ENCODE measurements at regions of chr3 and their contacts with region 1.

Region 1: DNA sequence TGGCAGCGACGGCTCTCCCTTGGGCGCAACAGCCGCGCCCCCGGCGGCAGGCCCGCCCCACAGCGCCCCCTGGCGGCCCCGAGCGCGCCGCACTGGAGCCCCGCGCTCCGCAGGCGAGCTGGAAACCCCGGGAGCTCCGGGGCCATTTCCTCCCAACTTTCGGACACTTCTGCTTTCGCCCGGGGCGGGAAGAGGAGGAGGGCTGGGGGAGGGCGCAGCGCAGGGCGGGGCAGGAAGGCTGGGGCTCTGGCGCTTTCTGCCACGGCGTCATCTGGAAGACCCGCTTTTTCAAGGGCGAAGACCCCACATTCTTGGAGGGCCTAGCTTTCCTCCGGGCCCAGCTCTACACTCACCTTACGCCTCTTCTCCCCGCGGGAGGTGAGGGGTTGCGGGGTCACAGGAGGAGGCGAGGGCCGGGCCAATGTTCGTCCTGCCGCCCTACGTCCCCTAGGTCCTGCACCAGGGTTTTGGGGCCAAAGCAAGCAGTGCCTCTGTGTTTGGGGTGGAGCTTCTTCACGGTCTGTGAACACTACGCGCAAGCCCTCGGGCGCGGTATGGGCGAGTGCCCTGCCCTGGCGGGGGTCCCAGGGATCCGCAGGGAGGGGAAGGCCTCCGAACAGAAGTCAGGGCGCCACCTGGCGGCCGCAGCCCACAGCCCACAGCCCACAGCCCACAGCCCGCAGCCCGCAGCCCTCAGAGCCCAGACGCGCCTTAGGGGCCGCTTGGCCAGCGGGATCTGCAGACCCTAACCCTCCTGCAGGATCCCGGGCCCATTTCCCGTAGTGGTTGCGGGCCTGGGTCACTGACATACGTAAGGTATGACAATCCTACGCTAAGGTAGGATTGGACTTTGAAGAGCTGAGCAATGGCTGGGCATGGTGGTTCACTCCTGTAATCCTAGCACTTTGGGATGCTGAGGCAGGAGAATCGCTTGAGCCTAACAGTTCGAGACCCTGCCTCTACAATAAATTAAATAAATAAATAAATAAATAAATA is 31.1 kb downstream of the FOXL2 start:
- DNase-seq: peak; percentile 91
- H3K4me3 Mint-ChIP-seq: peak overlapping the region; percentile 85
- H3K27ac Mint-ChIP-seq: peak overlapping the region; percentile 76
- H3K4me1 Mint-ChIP-seq: peaks cover 6% of the 10 kb centered on the region
- H3K27me3 Mint-ChIP-seq: no peaks in the 10 kb centered on the region
- CTCF ChIP-seq: peak; percentile 94

Region 2: DNA sequence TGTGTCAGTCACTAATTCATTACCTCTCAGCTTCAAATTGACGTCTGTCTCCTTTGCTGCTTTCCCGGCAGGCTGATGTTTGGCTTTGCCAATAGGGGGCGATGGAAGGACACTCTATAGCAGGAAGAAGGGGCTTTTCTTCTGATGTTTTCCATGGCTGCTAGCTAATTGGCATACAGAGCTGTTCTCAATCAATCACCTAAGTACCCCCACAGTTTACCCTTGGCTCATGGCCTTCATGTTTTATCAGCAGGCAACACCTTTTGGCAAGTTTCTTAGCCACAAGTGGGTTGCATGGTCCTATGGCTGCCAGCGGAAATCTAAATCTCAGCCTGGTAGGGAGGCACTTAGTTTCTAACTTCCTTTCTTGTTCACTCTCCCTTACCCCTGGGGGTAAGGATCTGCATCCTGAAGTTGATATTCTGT is 436.4 kb before region 1 on chr3:
- CTCF ChIA-PET with region 1: no interaction called
- POLR2A ChIA-PET with region 1: no interaction called
- intact Hi-C with region 1: loop called (anchors 1 kb)
- DNase-seq: peak; percentile 62
- H3K4me3 Mint-ChIP-seq: no peak overlapping the region
- H3K27ac Mint-ChIP-seq: peak overlapping the region; percentile 57
- H3K4me1 Mint-ChIP-seq: peaks cover 6% of the 10 kb centered on the region
- H3K27me3 Mint-ChIP-seq: no peaks in the 10 kb centered on the region
- CTCF ChIP-seq: peak; percentile 88

Region 3: DNA sequence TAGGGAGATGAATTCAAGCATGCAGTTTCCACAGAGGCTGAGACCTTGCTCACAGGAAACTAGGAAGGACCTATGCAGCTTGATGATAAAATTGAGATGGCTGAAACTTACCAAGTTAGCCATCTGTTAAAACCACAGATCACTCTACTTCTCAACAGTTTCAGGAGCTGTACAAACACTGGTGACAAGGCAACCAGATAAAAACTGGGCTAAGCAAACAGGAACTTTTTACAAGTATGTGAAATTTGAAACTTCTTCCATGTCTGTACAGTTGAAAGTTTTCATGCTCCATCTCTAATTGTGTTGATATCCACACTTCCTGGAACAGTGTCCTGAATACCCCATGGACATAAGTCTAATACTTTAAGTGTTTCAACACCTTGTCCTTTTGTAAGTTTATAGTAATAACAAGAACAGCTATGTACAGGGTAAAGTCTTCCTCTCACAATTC is 229.0 kb before region 1 on chr3:
- CTCF ChIA-PET with region 1: interaction called, 81 read pairs
- POLR2A ChIA-PET with region 1: no interaction called
- intact Hi-C with region 1: no loop called
- DNase-seq: peak; percentile 7
- H3K4me3 Mint-ChIP-seq: no peak overlapping the region
- H3K27ac Mint-ChIP-seq: no peak overlapping the region
- H3K4me1 Mint-ChIP-seq: no peaks in the 10 kb centered on the region
- H3K27me3 Mint-ChIP-seq: no peaks in the 10 kb centered on the region
- CTCF ChIP-seq: no peak

Region 4: DNA sequence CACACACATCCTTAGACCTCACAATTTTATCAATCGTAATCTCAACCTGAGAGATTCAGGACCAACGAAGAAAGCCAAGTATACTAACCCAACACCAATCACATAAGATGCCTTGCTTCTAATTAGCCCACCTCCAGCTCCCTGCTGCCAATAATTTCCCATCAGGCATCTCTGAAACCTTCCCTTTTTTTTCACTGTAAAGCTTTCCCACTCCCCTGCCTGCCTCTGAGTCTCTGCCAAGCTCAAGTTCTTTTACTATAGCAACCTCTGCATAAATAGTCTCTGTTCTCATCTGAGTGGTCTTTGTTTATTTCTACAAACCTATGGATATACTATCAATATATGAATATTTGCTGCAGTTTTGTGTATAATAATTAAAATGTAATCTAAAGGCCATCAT is 167.6 kb before region 1 on chr3:
- CTCF ChIA-PET with region 1: interaction called, 11 read pairs
- POLR2A ChIA-PET with region 1: no interaction called
- intact Hi-C with region 1: no loop called
- DNase-seq: no peak
- H3K4me3 Mint-ChIP-seq: no peak overlapping the region
- H3K27ac Mint-ChIP-seq: no peak overlapping the region
- H3K4me1 Mint-ChIP-seq: no peaks in the 10 kb centered on the region
- H3K27me3 Mint-ChIP-seq: no peaks in the 10 kb centered on the region
- CTCF ChIP-seq: no peak

Region 5: GRCh38 chr3:138824114-138824506 is 91.7 kb before region 1 on chr3:
- CTCF ChIA-PET with region 1: interaction called, 14 read pairs
- POLR2A ChIA-PET with region 1: interaction called, 5 read pairs
- intact Hi-C with region 1: no loop called
- DNase-seq: no peak
- H3K4me3 Mint-ChIP-seq: no peak overlapping the region
- H3K27ac Mint-ChIP-seq: peak overlapping the region; percentile 36
- H3K4me1 Mint-ChIP-seq: peaks cover 5% of the 10 kb centered on the region
- H3K27me3 Mint-ChIP-seq: no peaks in the 10 kb centered on the region
- CTCF ChIP-seq: no peak

Region 6: GRCh38 chr3:138890555-138891187 is 25.1 kb before region 1 on chr3:
- CTCF ChIA-PET with region 1: interaction called, 11 read pairs
- POLR2A ChIA-PET with region 1: no interaction called
- intact Hi-C with region 1: no loop called
- DNase-seq: no peak
- H3K4me3 Mint-ChIP-seq: no peak overlapping the region
- H3K27ac Mint-ChIP-seq: no peak overlapping the region
- H3K4me1 Mint-ChIP-seq: peaks cover 6% of the 10 kb centered on the region
- H3K27me3 Mint-ChIP-seq: no peaks in the 10 kb centered on the region
- CTCF ChIP-seq: no peak

Region 7: DNA sequence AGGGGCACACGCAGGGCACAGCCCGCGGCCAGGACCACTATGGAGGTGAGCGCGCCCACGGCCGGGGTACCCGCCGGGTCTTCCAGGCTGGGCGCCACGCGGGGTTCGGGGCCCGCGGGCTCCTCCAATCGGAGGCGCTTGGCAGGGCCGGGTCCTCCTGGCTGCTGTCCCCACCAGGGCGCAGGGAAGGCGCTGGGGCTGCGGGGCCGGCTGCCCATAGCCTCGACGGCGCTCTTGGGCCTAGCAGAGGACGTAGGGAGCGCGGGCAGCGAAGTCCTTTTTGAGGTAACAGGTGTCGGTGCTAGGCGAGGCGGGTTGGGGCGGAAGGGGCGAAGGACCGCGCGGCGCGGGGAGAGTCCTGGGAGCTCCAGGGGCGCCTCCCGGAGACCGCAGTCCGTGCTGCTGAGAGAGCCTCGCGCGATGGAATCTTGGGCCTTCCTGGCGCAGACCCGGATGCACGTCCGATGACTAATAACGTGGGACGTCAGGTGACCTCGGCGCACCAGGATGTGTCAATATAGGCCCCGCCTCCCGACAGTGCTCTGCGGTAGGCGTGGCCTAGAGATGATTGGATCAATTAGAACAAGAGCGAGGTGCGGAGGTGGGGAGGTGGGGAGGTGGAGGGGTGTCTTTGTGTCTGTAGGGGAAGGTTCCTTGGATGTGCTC is 90.4 kb after region 1 on chr3 and contains the start of gene PRR23A:
- CTCF ChIA-PET with region 1: no interaction called
- POLR2A ChIA-PET with region 1: no interaction called
- intact Hi-C with region 1: no loop called
- DNase-seq: no peak
- H3K4me3 Mint-ChIP-seq: no peak within 1 kb of the TSS
- H3K27ac Mint-ChIP-seq: no peak within 1 kb of the TSS
- H3K4me1 Mint-ChIP-seq: no peaks in the 10 kb centered on the region
- H3K27me3 Mint-ChIP-seq: no peaks in the 10 kb centered on the region
- CTCF ChIP-seq: no peak
- total RNA-seq, gene PRR23A: not detected in 2 replicates

Measured in MCF 10A (cell line).